A549 (cell line): ENCODE measurements at regions of chr1 and their contacts with region 1.

Region 1: GRCh38 chr1:41432481-41433280 is 51.8 kb downstream of the EDN2 start:
- DNase-seq: peak; percentile 87
- ATAC-seq: peak; percentile 91 to 98
- H3K4me3 ChIP-seq: 0 out of 3 replicates have a peak overlapping the region, but pooled peaks have one; percentile 15
- H3K27ac ChIP-seq: peak overlapping the region; percentile 80 to 90
- H3K4me1 ChIP-seq: peaks cover 23% of the 10 kb centered on the region
- CTCF ChIP-seq: peak; percentile 92
- EP300 ChIP-seq: no peak
- POLR2A ChIP-seq: no peak
- RAD21 ChIP-seq: peak; percentile 92 to 93

Region 2: DNA sequence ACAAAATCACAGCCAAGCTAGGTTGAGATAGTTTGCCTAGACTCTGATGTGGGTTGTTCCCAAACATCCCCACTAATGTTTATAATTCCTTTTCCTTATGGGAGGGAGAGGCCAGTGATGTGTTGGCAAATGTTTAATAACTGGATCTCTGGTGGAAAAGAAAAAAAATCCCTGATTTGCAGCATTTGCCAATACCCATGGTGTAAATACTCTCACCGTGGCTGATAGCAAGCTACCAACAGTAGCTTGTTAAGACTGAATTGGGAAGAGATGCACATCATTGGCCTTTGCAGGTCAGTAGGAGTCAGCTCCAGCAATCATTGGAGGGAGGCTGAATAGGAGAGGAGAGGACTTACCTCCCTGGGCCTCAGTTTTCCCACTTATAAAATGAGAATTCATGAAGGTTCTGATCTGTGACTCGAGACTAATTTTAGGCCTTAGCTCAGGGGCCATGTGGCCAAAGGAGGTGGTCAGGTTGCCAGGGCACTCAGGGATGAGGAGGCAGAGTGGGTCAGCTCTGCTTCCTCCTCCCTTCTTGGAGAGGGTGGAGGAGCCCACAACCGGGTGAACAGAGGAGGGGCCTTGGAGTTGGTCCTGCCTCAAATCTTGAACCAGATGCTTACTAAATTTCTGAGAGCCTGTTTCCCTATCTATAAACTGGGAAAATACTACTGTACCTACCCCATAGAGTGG is 170.6 kb before region 1 on chr1:
- CTCF ChIA-PET with region 1: interaction called, 13 read pairs
- POLR2A ChIA-PET with region 1: no interaction called
- DNase-seq: no peak
- ATAC-seq: no peak
- H3K4me3 ChIP-seq: no peak overlapping the region
- H3K27ac ChIP-seq: no peak overlapping the region
- H3K4me1 ChIP-seq: no peaks in the 10 kb centered on the region
- CTCF ChIP-seq: no peak
- EP300 ChIP-seq: no peak
- POLR2A ChIP-seq: no peak
- RAD21 ChIP-seq: no peak

Region 3: GRCh38 chr1:41268154-41268770 is 164.4 kb before region 1 on chr1:
- CTCF ChIA-PET with region 1: interaction called, 23 read pairs
- POLR2A ChIA-PET with region 1: no interaction called
- DNase-seq: peak; percentile 64 to 77
- ATAC-seq: peak; percentile 67 to 94
- H3K4me3 ChIP-seq: no peak overlapping the region
- H3K27ac ChIP-seq: peak overlapping the region; percentile 34 to 48; a peak in 2 of 6 replicates
- H3K4me1 ChIP-seq: peaks cover 3% of the 10 kb centered on the region; the same call in 1 of the 3 replicates
- CTCF ChIP-seq: peak; percentile 84
- EP300 ChIP-seq: no peak
- POLR2A ChIP-seq: no peak
- RAD21 ChIP-seq: peak; percentile 90 to 91

Region 4: GRCh38 chr1:41274752-41275545 is 157.7 kb before region 1 on chr1:
- CTCF ChIA-PET with region 1: interaction called, 23 read pairs
- POLR2A ChIA-PET with region 1: no interaction called
- DNase-seq: no peak
- ATAC-seq: no peak
- H3K4me3 ChIP-seq: no peak overlapping the region
- H3K27ac ChIP-seq: no peak overlapping the region
- H3K4me1 ChIP-seq: no peaks in the 10 kb centered on the region
- CTCF ChIP-seq: no peak
- EP300 ChIP-seq: no peak
- POLR2A ChIP-seq: no peak
- RAD21 ChIP-seq: no peak

Region 5: DNA sequence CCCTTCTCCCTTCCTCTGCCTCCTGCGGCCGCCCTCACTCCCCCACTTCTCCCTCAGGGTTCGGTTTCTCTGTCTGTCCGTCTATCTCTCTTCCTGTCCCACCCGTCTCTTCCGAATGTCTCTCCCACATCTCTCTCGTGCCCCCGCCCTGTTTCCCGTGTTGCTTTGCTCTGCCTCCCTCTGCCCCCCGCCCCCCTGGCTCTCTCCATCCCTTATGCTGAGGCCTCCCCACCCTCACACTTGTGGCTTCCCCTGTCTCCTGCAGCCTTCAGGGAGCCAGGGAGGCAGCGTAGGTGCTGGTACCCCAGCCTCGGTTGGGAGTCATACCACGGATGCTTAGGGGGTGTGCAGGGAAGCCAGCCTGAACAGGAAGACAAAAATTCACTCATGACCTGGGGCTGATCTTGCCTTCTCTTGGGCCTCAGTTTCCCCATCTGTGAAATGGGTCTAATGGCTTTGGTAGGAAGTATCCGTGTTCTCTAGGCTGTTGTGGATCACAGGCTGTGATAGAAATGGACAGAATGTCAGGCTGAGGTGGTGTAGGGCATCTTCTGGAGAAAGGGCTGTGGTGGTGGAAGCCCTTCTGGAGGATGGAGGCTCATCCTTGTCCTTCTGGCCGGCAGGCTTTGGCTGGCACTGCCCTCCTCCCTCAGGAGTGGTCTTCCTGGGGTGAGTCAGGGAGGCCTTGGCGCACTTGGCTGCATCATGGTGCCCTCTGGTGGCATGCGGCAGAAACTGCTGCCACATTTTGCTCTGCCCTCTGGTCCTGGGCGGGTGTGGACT is 15.9 kb before region 1 on chr1:
- CTCF ChIA-PET with region 1: interaction called, 107 read pairs
- POLR2A ChIA-PET with region 1: no interaction called
- DNase-seq: peak; percentile 70 to 76
- ATAC-seq: peak; percentile 69 to 88; a peak in 5 of 6 replicates
- H3K4me3 ChIP-seq: no peak overlapping the region
- H3K27ac ChIP-seq: 0 out of 6 replicates have a peak overlapping the region, but pooled peaks of 1 of the 2 experiments have one; percentile 6
- H3K4me1 ChIP-seq: peaks cover 15% of the 10 kb centered on the region
- CTCF ChIP-seq: peak; percentile 73
- EP300 ChIP-seq: no peak
- POLR2A ChIP-seq: no peak
- RAD21 ChIP-seq: peak; percentile 84 to 91

Region 6: DNA sequence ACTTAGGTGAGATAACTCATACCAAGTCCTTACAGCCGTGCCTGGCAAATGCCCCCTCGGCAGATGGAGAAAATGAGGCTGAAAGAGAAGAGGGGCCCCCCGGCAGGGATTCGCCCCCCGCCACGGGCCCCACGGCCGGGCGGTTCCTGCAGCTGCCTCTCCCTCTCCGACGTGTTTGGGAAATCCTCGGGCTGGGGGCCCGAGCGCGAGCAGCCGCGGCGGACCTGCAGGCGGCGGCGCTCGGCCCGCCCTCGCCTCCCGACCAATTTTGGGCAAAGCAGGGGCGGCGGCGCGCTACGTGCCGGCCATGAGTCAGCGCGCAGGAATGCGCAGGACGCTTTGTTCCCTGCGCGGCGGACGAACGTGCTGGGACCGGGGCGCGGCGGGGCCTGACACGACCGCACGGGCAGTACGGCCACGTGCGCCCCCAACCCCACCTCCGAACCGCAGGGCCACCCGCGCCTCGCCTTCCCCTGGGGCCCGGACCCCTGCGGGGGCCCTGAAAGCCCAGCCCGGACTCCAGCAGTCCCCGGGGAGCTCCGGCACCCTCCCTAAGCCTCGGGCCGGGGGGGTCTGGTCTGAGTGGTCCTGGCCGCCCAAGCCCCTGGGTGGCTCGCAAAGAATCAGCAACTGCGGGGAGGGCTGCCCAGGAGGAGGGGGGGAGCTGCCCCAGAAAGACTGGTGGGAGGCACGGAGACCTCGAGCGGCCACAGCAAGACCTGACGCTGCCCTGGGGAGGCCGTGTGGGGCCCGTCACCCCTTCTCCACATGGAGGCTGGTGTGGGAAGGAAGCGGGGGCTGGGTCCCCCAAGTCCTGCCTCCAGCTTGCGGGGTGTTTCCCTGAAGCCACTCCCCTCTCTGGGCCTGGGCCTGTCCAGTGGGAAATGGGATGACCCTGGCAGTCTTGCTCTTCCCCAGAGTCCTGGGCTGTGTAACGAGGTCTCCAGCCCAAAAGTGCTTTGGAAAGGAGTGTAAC is 63.7 kb after region 1 on chr1:
- CTCF ChIA-PET with region 1: interaction called, 19 read pairs
- POLR2A ChIA-PET with region 1: no interaction called
- DNase-seq: peak in 1 of 2 experiments; percentile 82
- ATAC-seq: peak; percentile 57 to 70
- H3K4me3 ChIP-seq: peak overlapping the region; percentile 33
- H3K27ac ChIP-seq: peak overlapping the region; percentile 82 to 100
- H3K4me1 ChIP-seq: peaks cover 90% of the 10 kb centered on the region
- CTCF ChIP-seq: no peak
- EP300 ChIP-seq: no peak; a peak in 1 of 5 replicates
- POLR2A ChIP-seq: no peak
- RAD21 ChIP-seq: no peak